ENCODE measurements at regions of chr3 and their contacts with region 1.

Region 1: GRCh38 chr3:128725932-128726690 is at the start of gene RAB7A:
- DNase-seq: peak; percentile 98 to 99
- ATAC-seq: peak; percentile 86 to 93
- H3K4me3 ChIP-seq: peak within 1 kb of the TSS; percentile 80 to 99 (median 92)
- H3K27ac ChIP-seq: peak within 1 kb of the TSS; percentile 96 to 99 (median 98)
- H3K4me1 ChIP-seq: peaks cover 39 to 44% of the 10 kb centered on the region in 2 donors
- H3K27me3 ChIP-seq: no peaks in the 10 kb centered on the region
- CTCF ChIP-seq: peak in 3 of 5 experiments; percentile 9 to 27 (median 16)
- POLR2A ChIP-seq: peak; percentile 99
- total RNA-seq, gene RAB7A: 102 to 190 (median 149) TPM

Region 2: GRCh38 chr3:128709508-128710210 is 16.5 kb before region 1 on chr3:
- in situ Hi-C with region 1: no loop called
- intact Hi-C with region 1: loop called (anchors 2 kb)
- DNase-seq: no peak
- ATAC-seq: no peak
- H3K4me3 ChIP-seq: no peak overlapping the region
- H3K27ac ChIP-seq: peak overlapping the region; percentile 78 to 87 (median 85)
- H3K4me1 ChIP-seq: peaks cover 9 to 15% of the 10 kb centered on the region in 2 donors
- H3K27me3 ChIP-seq: no peaks in the 10 kb centered on the region
- CTCF ChIP-seq: no peak
- POLR2A ChIP-seq: no peak

Region 3: DNA sequence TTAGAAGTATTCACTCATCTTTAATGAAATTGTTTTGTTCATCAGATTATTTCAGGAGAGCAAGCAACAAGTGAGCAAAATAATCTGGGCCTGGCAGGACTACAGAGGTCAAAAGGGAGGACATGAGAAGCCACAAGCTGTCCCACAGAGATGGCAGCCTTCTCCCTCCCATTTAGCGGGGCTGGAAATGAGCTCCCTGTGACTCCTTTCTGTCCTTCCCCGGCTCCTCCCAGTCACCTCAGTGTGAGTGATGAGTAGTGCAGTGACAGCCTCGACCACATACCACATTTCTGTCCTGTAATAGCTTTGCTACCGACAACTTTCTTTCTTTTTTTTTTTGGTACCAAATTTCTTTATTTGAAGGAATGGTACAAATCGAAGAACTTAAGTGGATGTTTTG is 37.9 kb after region 1 on chr3:
- in situ Hi-C with region 1: no loop called
- intact Hi-C with region 1: loop called (anchors 2 kb)
- DNase-seq: peak; percentile 66 to 76
- ATAC-seq: peak; percentile 39 to 57
- H3K4me3 ChIP-seq: no peak overlapping the region
- H3K27ac ChIP-seq: peak overlapping the region; percentile 80 to 94 (median 84)
- H3K4me1 ChIP-seq: peaks cover 81 to 82% of the 10 kb centered on the region in 2 donors
- H3K27me3 ChIP-seq: no peaks in the 10 kb centered on the region
- CTCF ChIP-seq: no peak
- POLR2A ChIP-seq: no peak

Region 4: DNA sequence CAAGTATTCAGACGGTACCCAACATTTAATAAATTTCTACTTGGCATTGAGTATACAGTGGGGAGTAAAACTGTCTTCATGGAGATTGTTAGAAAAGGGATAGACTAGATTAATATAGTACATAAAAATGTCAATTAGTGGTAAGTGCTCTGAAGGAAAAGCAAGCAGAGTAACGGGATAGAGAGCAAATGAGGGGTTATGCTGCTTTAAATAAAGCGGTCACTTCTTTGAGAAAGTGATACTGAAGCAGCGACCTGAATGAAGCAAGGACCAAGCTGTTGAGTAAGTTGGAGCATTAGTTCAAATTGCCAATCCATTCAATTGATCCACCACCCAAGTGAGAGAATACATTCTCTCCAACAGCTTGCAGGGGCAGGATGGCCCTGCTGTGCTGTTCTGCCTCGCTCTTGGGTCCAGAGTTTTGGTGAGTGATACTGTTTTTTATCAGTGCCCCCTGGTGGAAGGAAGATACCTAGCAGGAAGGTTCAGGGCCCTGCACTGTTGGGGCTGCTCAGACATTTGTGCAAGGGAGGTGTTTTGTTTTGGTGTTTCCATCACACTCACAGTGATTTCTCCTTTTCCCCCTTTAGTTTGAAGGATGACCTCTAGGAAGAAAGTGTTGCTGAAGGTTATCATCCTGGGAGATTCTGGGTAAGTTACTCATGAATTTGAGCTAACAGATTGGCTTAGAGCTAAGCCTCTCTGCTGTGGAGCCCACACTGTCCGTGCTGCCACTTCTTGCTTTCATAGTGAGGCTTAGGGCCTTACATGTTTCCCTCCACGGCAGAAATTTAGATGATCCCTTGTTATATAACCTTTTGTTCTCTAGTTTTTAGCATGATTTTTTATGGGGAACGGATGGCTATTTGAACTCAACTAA is 68.9 kb after region 1 on chr3:
- in situ Hi-C with region 1: loop called in 1 of 4 experiments (anchors 10 kb)
- intact Hi-C with region 1: loop called (anchors 2 kb)
- DNase-seq: peak; percentile 51 to 67
- ATAC-seq: peak; percentile 57 to 68
- H3K4me3 ChIP-seq: no peak overlapping the region
- H3K27ac ChIP-seq: peak overlapping the region; percentile 94 to 99 (median 96)
- H3K4me1 ChIP-seq: peaks cover 41 to 66% of the 10 kb centered on the region in 2 donors
- H3K27me3 ChIP-seq: no peaks in the 10 kb centered on the region
- CTCF ChIP-seq: peak; percentile 75 to 89 (median 85)
- POLR2A ChIP-seq: no peak

Region 5: DNA sequence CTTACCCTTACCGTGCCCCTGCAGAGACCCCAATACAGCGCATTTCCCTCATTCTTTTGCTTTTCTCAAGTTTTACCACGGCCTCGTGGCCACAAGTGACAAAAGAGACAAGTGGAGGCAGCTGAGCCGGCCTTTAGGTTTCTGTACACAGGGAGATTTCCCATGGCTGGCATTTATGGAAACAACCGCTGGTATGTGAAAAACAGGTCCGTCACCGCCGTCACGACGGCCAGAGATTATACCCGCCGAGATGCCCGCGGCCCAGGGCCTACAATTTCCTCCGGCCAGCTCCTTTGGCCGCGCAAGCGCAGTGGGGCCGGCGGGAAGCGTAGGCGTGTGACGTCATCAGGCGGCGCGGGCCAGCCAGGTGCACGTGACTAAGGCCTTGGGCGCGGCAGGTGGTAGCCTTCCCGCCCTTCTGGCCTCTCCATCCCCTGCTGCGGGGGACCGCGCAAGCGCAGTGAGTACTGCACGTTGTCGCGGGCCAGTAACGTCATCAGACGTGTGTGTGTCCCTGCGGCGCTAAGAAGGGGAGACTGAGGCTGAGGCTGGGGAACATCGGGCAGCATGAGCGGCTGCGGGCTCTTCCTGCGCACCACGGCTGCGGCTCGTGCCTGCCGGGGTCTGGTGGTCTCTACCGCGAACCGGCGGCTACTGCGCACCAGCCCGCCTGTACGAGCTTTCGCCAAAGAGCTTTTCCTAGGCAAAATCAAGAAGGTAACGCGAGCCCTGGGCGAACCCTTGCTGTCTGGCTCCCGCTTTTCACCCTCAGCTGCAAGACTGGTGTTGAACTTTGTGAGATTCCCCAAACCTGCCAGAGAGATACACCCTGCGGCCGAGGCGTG is 153.2 kb after region 1 on chr3 and contains the start of gene ACAD9:
- in situ Hi-C with region 1: no loop called
- intact Hi-C with region 1: loop called (anchors 1 kb)
- DNase-seq: peak; percentile 95 to 98
- ATAC-seq: peak; percentile 85 to 89
- H3K4me3 ChIP-seq: peak within 1 kb of the TSS; percentile 64 to 91 (median 78)
- H3K27ac ChIP-seq: peak within 1 kb of the TSS; percentile 86 to 96 (median 92)
- H3K4me1 ChIP-seq: peaks cover 52 to 60% of the 10 kb centered on the region in 2 donors
- H3K27me3 ChIP-seq: no peaks in the 10 kb centered on the region
- CTCF ChIP-seq: peak in 2 of 5 experiments; percentile 47
- POLR2A ChIP-seq: peak; percentile 95 to 96
- total RNA-seq, gene ACAD9: 26.3 to 43.0 (median 37.5) TPM

Measured in gastrocnemius medialis (tissue), 4 donors.